ENCODE measurements at regions of chrX and their contacts with region 1.

Region 1: GRCh38 chrX:19625612-19626011 is 110.3 kb upstream of the MAP3K15 start:
- DNase-seq: peak; percentile 81
- ATAC-seq: peak; percentile 94
- H3K4me3 ChIP-seq: no peak overlapping the region
- H3K27ac ChIP-seq: peak overlapping the region; percentile 83
- H3K4me1 ChIP-seq: peaks cover 48% of the 10 kb centered on the region
- H3K27me3 ChIP-seq: no peaks in the 10 kb centered on the region
- CTCF ChIP-seq: no peak

Region 2: DNA sequence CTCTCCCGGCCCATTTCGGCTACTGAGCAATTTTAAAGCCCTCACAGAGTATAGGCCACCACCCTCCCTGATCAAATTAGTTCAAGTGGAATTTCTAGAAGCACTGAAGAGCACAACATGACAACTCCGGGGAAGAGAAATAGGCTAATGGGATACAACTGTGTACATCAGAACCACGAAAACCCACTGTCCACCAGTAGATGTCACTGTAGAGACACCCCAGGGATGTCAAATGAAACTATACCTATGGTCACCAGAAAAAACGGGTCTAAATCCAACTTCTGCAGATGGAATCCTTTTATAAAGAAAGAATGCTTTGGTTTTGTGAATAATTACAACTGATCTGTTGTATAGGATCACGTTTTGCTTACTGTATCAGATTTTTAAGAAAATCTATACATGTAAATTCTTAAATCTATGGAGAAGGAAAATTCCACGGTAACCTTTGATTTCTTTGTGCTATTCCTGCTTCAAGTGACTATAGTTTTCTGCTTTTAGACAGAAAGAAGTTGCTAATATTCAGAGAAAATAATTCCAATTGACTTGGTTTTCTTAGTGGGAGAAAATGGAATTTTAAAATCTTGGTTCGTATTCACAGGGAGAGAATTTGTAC is 80.8 kb before region 1 on chrX:
- CTCF ChIA-PET with region 1: no interaction called
- POLR2A ChIA-PET with region 1: no interaction called
- intact Hi-C with region 1: loop called (anchors 10 kb)
- DNase-seq: peak; percentile 76
- ATAC-seq: peak; percentile 86
- H3K4me3 ChIP-seq: no peak overlapping the region
- H3K27ac ChIP-seq: no peak overlapping the region
- H3K4me1 ChIP-seq: no peaks in the 10 kb centered on the region
- H3K27me3 ChIP-seq: no peaks in the 10 kb centered on the region
- CTCF ChIP-seq: peak; percentile 78

Region 3: GRCh38 chrX:19593690-19594089 is 31.9 kb before region 1 on chrX:
- CTCF ChIA-PET with region 1: no interaction called
- POLR2A ChIA-PET with region 1: no interaction called
- intact Hi-C with region 1: loop called (anchors 2 kb)
- DNase-seq: peak; percentile 56
- ATAC-seq: no peak
- H3K4me3 ChIP-seq: no peak overlapping the region
- H3K27ac ChIP-seq: no peak overlapping the region
- H3K4me1 ChIP-seq: no peaks in the 10 kb centered on the region
- H3K27me3 ChIP-seq: no peaks in the 10 kb centered on the region
- CTCF ChIP-seq: peak; percentile 72

Region 4: DNA sequence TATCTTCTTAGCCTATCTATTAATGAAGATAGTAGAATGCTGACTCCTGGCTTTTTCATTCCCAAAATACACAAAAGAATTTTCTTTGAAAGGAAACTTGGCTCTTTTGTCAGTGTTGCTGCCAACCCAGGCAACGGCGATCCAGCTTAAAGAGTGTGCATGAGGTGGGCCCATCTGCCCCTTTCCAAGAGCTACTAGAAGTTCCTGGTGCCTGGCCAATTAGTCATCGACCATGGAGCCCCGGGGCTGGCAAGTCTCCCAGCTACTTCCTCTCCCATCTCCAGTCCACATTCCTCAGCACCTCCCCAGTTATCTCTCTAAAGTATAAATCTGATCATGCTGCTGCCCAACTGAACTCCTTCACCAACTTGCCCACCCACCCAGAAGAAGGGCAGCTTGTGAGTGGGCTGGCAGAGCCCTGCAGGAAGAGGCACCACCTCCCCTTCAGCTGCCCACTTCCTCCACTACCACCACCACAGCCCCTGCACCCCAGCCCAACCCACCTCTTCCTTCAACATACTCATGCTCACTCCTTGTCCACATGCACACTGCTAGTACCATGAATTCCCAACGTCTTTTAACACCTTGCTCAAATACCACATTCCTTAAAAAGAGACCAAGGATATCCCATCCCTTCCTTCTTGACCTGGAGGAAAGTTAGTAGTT is 47.9 kb after region 1 on chrX:
- CTCF ChIA-PET with region 1: no interaction called
- POLR2A ChIA-PET with region 1: no interaction called
- intact Hi-C with region 1: loop called (anchors 10 kb)
- DNase-seq: peak; percentile 95
- ATAC-seq: peak; percentile 50
- H3K4me3 ChIP-seq: 0 out of 2 replicates have a peak overlapping the region, but pooled peaks have one; percentile 27
- H3K27ac ChIP-seq: peak overlapping the region; percentile 94
- H3K4me1 ChIP-seq: peaks cover 67% of the 10 kb centered on the region
- H3K27me3 ChIP-seq: no peaks in the 10 kb centered on the region
- CTCF ChIP-seq: no peak

Region 5: GRCh38 chrX:19791562-19791961 is 165.9 kb after region 1 on chrX:
- CTCF ChIA-PET with region 1: no interaction called
- POLR2A ChIA-PET with region 1: no interaction called
- intact Hi-C with region 1: no loop called
- DNase-seq: no peak
- ATAC-seq: no peak
- H3K4me3 ChIP-seq: no peak overlapping the region
- H3K27ac ChIP-seq: no peak overlapping the region
- H3K4me1 ChIP-seq: peaks cover 7% of the 10 kb centered on the region
- H3K27me3 ChIP-seq: no peaks in the 10 kb centered on the region
- CTCF ChIP-seq: no peak

Region 6: GRCh38 chrX:20284992-20285391 is 659.4 kb after region 1 on chrX:
- CTCF ChIA-PET with region 1: no interaction called
- POLR2A ChIA-PET with region 1: no interaction called
- intact Hi-C with region 1: no loop called
- DNase-seq: no peak
- ATAC-seq: no peak
- H3K4me3 ChIP-seq: no peak overlapping the region
- H3K27ac ChIP-seq: peak overlapping the region; percentile 77
- H3K4me1 ChIP-seq: peaks cover 16% of the 10 kb centered on the region
- H3K27me3 ChIP-seq: no peaks in the 10 kb centered on the region
- CTCF ChIP-seq: no peak